CD8-positive, alpha-beta T cell (primary cell): ENCODE measurements at regions of chr19 and their contacts with region 1.

Region 1: GRCh38 chr19:17052439-17053210 is 22.6 kb downstream of the HAUS8 start:
- DNase-seq: peak in 4 of 9 experiments; percentile 20 to 59 (median 40)
- ATAC-seq: no peak
- H3K4me3 ChIP-seq: no peak overlapping the region
- H3K4me3 Mint-ChIP-seq: no peak overlapping the region
- H3K27ac ChIP-seq: no peak overlapping the region
- H3K27ac Mint-ChIP-seq: no peak overlapping the region
- H3K4me1 ChIP-seq: no peaks in the 10 kb centered on the region
- H3K4me1 Mint-ChIP-seq: no peaks in the 10 kb centered on the region
- H3K27me3 ChIP-seq: no peaks in the 10 kb centered on the region
- H3K27me3 Mint-ChIP-seq: no peaks in the 10 kb centered on the region
- CTCF ChIP-seq: no peak

Region 2: DNA sequence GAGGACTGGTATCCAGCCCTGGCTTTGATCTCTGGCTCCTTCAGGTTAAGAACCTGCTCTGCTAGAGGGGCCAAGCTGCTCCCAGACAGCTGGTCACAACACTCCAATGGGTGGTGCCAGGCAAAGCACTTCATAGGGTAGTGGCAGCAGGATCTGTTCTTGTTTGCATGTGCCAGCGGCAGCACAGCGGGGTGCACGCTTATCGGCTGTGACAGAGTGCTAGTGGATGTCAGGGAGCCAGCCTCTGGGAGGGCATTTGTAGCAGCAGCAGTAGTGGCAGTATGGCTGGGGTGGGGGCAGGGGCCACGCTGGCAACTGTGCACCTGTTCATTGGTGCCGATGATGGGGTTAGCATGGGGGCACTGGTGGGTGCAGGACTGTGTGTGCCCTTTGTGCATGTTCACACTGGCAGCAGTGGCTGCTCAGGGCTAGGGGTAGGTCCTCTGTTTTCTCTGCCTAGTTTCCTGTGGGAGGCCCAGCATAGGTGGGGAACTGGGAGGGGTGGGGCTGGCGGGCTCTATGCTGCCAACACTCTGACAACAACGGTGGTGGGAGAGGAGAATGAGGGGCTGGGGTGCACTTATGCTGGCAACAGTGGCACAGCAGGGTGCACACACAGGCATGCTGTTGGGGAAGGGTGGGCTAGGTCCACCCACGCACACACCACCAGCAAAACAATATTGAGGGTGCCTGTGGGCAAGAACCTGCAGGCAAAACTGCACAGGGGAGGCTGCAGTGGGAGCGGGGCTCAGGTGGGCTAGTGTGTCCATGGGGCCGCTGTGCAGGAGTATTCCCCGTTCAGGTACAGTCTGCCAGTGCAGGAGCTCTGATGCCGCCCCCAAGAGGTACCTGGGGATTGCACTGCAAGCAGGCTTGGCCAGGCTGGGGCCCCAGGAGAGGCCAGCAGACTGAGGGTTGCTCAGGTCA is 835.6 kb before region 1 on chr19:
- CTCF ChIA-PET with region 1: no interaction called
- POLR2A ChIA-PET with region 1: no interaction called
- intact Hi-C with region 1: no loop called
- DNase-seq: peak in 8 of 9 experiments; percentile 28 to 83 (median 59)
- ATAC-seq: peak; percentile 86
- H3K4me3 ChIP-seq: peak overlapping the region in 1 of 2 experiments; percentile 29
- H3K4me3 Mint-ChIP-seq: peak overlapping the region; percentile 80
- H3K27ac ChIP-seq: peak overlapping the region; percentile 44
- H3K27ac Mint-ChIP-seq: peak overlapping the region; percentile 95
- H3K4me1 ChIP-seq: peaks cover 66% of the 10 kb centered on the region
- H3K4me1 Mint-ChIP-seq: peaks cover 65% of the 10 kb centered on the region
- H3K27me3 ChIP-seq: no peaks in the 10 kb centered on the region
- H3K27me3 Mint-ChIP-seq: no peaks in the 10 kb centered on the region
- CTCF ChIP-seq: no peak

Region 3: DNA sequence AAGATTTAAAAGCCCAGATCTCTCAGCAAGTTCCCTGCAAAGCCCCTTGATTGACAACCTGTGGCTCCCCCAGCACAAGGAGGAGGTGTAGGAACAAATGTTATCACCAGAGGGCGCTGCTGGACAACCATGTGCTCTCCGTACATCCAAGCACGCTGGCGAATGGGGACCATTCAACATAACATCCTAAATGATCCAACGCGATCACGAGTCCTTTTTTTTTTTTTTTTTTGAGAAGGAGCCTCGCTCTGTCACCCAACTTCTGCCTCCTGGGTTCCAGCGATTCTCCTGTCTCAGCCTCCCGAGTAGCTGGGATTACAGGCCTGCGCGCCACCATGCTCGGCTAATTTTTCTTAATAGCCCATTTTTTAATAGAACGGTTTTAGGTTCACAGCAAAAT is 281.0 kb before region 1 on chr19:
- CTCF ChIA-PET with region 1: interaction called, 5 read pairs
- POLR2A ChIA-PET with region 1: no interaction called
- intact Hi-C with region 1: loop called (anchors 5 kb)
- DNase-seq: peak; percentile 52 to 85 (median 76)
- ATAC-seq: peak; percentile 69
- H3K4me3 ChIP-seq: no peak overlapping the region
- H3K4me3 Mint-ChIP-seq: no peak overlapping the region
- H3K27ac ChIP-seq: no peak overlapping the region
- H3K27ac Mint-ChIP-seq: no peak overlapping the region
- H3K4me1 ChIP-seq: no peaks in the 10 kb centered on the region
- H3K4me1 Mint-ChIP-seq: no peaks in the 10 kb centered on the region
- H3K27me3 ChIP-seq: peaks cover 0 to 20% of the 10 kb centered on the region in 2 experiments
- H3K27me3 Mint-ChIP-seq: peaks cover 43% of the 10 kb centered on the region
- CTCF ChIP-seq: peak; percentile 74